Naive thymus-derived CD4-positive, alpha-beta T cell (primary cell): ENCODE measurements at regions of chrX and their contacts with region 1.

Region 1: GRCh38 chrX:49309401-49309981 is 6.0 kb downstream of the GAGE10 start:
- DNase-seq: peak in 7 of 9 donors; percentile 23 to 64 (median 52)
- ATAC-seq: peak; percentile 69
- H3K4me3 ChIP-seq: peak overlapping the region; percentile 54
- H3K4me3 Mint-ChIP-seq: peak overlapping the region; percentile 82 to 95 (median 86)
- H3K27ac ChIP-seq: peak overlapping the region; percentile 70
- H3K27ac Mint-ChIP-seq: peak overlapping the region; percentile 92 to 100 (median 98)
- H3K4me1 ChIP-seq: peaks cover 10 to 15% of the 10 kb centered on the region in 2 donors
- H3K4me1 Mint-ChIP-seq: peaks cover 19 to 29% (median 21%) of the 10 kb centered on the region in 7 donors
- H3K27me3 ChIP-seq: no peaks in the 10 kb centered on the region
- H3K27me3 Mint-ChIP-seq: peaks cover 0 to 25% (median 0%) of the 10 kb centered on the region in 5 donors

Region 2: DNA sequence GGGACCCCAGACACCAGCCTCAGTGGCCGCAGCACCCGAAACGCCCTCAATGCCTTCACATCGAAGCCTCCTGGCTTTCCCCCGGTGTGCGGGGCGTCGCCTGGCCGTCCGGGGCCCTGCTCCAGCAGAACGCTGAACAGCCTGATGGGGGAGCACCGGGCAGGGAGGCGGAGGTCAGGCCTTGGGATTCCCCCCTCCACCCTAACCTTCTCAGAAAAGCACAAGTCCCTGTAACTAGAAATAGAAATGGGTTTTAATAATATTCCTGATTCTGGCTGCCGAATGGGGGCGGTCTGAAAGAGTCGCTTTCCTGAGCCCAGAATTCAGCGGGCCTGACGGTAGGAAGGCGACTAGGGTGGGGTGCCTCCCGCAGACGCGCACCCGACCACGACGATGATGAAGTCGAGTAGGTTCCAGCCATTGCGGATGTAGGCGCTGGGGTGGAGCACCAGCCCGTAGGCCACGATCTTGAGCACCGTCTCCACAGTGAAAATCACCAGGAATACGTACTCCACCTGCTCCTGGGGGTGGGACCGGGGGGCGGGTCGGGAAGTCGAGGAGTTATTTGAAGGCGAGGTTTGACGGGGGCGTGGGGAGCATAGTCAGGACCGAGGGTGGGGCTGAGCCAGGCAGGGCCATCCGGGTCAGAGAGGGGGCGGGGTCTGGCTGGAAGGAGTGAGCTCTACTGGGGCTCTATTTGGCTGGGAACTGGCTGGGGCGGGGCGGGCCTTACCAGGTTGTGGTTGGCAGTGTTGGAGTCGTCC is 78.8 kb before region 1 on chrX:
- CTCF ChIA-PET with region 1: no interaction called
- POLR2A ChIA-PET with region 1: no interaction called
- intact Hi-C with region 1: loop called in 1 of 2 experiments (anchors 2 kb)
- DNase-seq: peak; percentile 19 to 63 (median 44)
- ATAC-seq: peak; percentile 78
- H3K4me3 ChIP-seq: peak overlapping the region; percentile 28
- H3K4me3 Mint-ChIP-seq: peak overlapping the region; percentile 76 to 87 (median 80)
- H3K27ac ChIP-seq: peak overlapping the region; percentile 71
- H3K27ac Mint-ChIP-seq: peak overlapping the region; percentile 67 to 94 (median 88)
- H3K4me1 ChIP-seq: peaks cover 0 to 4% of the 10 kb centered on the region in 2 donors
- H3K4me1 Mint-ChIP-seq: peaks cover 6 to 26% (median 21%) of the 10 kb centered on the region in 7 donors
- H3K27me3 ChIP-seq: no peaks in the 10 kb centered on the region
- H3K27me3 Mint-ChIP-seq: no peaks in the 10 kb centered on the region

Region 3: GRCh38 chrX:49276671-49277534 is 32.6 kb before region 1 on chrX:
- CTCF ChIA-PET with region 1: no interaction called
- POLR2A ChIA-PET with region 1: interaction called, 20 read pairs
- intact Hi-C with region 1: loop called in 1 of 2 experiments (anchors 1 kb)
- DNase-seq: no peak
- ATAC-seq: no peak
- H3K4me3 ChIP-seq: no peak overlapping the region
- H3K4me3 Mint-ChIP-seq: peak overlapping the region; percentile 32 to 91 (median 76)
- H3K27ac ChIP-seq: peak overlapping the region; percentile 50
- H3K27ac Mint-ChIP-seq: peak overlapping the region; percentile 76 to 94 (median 88)
- H3K4me1 ChIP-seq: peaks cover 61 to 77% of the 10 kb centered on the region in 2 donors
- H3K4me1 Mint-ChIP-seq: peaks cover 39 to 87% (median 78%) of the 10 kb centered on the region in 7 donors
- H3K27me3 ChIP-seq: no peaks in the 10 kb centered on the region
- H3K27me3 Mint-ChIP-seq: no peaks in the 10 kb centered on the region

Region 4: GRCh38 chrX:49710729-49711304 is 401.3 kb after region 1 on chrX:
- CTCF ChIA-PET with region 1: no interaction called
- POLR2A ChIA-PET with region 1: no interaction called
- intact Hi-C with region 1: no loop called
- DNase-seq: no peak
- ATAC-seq: no peak
- H3K4me3 ChIP-seq: no peak overlapping the region
- H3K4me3 Mint-ChIP-seq: no peak overlapping the region
- H3K27ac ChIP-seq: no peak overlapping the region
- H3K27ac Mint-ChIP-seq: no peak overlapping the region
- H3K4me1 ChIP-seq: no peaks in the 10 kb centered on the region
- H3K4me1 Mint-ChIP-seq: no peaks in the 10 kb centered on the region
- H3K27me3 ChIP-seq: no peaks in the 10 kb centered on the region
- H3K27me3 Mint-ChIP-seq: peaks cover 0 to 16% (median 0%) of the 10 kb centered on the region in 5 donors